ENCODE measurements at regions of chr2 and their contacts with region 1.

Region 1: DNA sequence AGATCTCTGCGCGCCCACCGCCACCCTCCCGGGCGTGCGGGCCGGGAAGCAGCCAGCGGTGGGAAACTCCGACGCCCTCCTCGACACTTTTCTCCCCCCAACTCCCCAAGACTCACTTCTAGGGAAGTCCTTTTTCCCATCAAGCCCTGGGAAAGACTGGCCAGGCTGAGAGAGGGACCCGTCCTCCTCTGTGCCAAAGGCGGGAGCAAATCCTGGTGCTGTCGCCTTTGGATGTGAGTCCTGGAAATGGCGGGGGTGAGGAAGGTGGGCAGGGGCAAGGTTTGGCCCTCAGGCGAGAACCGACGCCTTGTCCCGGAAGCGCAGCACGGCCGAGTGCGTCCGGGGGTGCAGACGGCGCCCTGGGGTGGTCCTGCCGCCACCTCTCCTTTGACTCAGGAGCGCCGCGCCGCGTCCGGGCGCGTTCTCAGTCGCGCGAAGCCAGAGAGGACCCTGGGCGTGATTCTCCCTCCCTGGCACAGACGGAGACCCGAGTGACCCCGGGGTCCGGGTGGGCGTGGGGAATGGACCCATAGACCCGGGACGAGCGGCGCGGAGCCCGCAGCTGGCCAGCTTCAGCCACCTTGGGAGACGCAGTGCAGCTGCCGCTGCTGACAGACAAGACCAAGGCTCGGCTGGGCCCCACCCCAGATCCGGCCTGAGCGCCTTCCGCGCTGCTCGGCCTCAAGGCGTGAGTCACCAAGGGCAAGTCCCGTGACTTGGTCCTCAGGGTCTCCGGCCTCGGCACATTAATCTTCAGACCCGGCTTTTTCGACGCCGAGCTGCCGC is 3.5 kb upstream of the LBX2 start:
- DNase-seq: no peak
- H3K4me3 ChIP-seq: peak overlapping the region; percentile 43
- H3K27me3 ChIP-seq: peaks cover 11% of the 10 kb centered on the region
- CTCF ChIP-seq: peak; percentile 39

Region 2: GRCh38 chr2:74472086-74472944 is 30.6 kb before region 1 on chr2 and contains the start of gene MRPL53:
- CTCF ChIA-PET with region 1: no interaction called
- POLR2A ChIA-PET with region 1: interaction called, 12 read pairs
- DNase-seq: peak; percentile 49
- H3K4me3 ChIP-seq: peak within 1 kb of the TSS; percentile 76
- H3K27me3 ChIP-seq: no peaks in the 10 kb centered on the region
- CTCF ChIP-seq: no peak
- polyA plus RNA-seq, gene MRPL53: 38.9 and 41.2 TPM in 2 replicates

Measured in BJ (cell line).